ENCODE measurements at regions of chr12 and their contacts with region 1.

Region 1: DNA sequence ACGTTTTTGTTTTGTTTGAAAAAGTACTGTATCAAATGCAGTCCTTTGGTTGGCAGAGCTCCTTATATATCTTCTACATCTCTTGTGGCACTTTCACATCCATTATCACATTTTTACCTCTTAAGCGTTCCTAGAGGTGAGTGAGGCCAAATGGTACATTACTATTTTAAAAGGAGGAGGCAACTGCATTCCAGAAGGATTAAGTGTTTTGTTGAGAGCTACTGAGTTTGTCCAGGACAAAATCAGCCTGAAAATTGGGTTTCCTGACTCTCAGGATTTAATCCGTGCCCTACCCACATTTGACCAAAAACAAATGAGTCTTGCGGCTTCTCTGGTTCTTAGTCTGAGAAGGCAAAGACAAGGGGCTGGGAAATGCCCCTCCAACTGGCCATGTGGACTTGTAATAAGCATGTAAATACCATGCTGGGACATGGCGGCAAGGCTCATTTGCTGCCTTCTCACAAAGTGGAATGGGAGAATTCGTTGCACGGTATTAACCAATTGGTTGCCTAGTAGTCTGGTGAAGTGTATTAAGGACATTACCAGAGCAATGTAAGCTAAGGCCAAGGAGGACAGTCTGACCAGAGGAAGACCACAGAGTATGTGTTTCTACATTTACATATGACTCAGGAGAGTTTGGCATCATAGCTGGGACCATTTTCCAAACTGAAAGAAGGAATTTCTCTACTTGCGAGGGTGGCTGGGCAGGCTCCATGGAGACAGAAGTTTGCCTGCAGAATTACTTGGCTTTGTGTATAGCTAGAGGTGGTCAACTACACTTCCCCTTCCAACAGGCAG is 175.8 kb upstream of the PLXNC1 start:
- DNase-seq: peak in 1 of 2 donors; percentile 68
- ATAC-seq: peak; percentile 39
- H3K4me3 ChIP-seq: no peak overlapping the region
- H3K27ac ChIP-seq: peak overlapping the region; percentile 73 to 98
- H3K4me1 ChIP-seq: peaks cover 4 to 6% of the 10 kb centered on the region in 2 donors
- H3K27me3 ChIP-seq: no peaks in the 10 kb centered on the region

Region 2: DNA sequence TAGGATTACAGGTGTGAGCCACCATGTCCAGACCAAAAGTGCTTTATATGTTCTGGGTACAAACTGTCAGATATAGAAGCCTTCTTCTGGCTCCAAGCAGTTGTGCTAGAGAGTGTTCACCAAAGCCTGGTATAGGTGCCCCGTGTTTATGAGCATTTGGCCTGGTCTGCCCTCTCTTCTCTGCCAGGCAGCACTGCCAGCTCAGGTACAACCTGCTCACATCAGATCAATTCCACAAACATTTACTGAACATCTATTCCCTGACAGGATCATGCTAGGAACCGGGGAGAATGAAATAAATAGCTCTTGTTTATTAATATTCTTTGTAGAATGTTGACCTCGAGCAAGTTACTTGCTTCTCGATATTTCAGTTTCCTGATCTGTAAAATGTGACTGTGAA is 420.2 kb before region 1 on chr12:
- intact Hi-C with region 1: no loop called
- DNase-seq: no peak
- ATAC-seq: no peak
- H3K4me3 ChIP-seq: no peak overlapping the region
- H3K27ac ChIP-seq: no peak overlapping the region
- H3K4me1 ChIP-seq: no peaks in the 10 kb centered on the region
- H3K27me3 ChIP-seq: no peaks in the 10 kb centered on the region

Region 3: GRCh38 chr12:93785262-93786010 is 187.2 kb before region 1 on chr12:
- intact Hi-C with region 1: loop called in 1 of 2 experiments (anchors 5 kb)
- DNase-seq: peak in 1 of 2 donors; percentile 68
- ATAC-seq: peak; percentile 90
- H3K4me3 ChIP-seq: no peak overlapping the region
- H3K27ac ChIP-seq: peak overlapping the region; percentile 50 to 84
- H3K4me1 ChIP-seq: peaks cover 0 to 9% of the 10 kb centered on the region in 2 donors
- H3K27me3 ChIP-seq: no peaks in the 10 kb centered on the region